HCT116 (cell line): ENCODE measurements at regions of chr14 and their contacts with region 1.

Region 1: DNA sequence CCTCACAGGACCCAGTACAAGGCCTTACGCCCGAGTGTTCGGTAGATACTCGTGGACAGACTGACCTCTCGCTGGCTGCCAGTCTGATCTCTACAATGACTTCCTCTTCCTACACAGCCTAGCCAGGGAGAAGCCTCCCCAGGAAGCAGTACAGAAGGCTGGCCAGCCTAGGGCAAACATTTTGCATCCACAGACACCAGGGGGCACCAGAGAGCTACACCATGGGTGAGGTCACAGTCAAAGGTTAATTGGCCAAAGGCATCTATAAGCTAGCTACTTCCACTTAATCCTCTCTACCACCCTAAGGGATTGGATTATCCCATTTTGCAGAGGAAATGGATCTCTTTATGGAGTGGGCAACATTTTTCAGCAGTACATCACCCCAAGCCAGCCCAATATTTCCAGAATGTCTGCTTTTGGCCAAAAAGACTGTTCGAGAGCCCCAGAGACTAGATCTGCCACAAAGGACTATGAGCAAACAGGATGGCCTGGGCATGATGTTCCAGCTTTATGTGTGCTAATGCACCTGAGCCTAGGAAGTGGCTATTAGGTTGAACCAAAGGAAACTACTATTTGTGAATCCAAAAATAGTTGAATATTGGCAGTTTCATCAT is 14.6 kb upstream of the PNMA1 start:
- DNase-seq: peak; percentile 61
- ATAC-seq: peak; percentile 93
- H3K4me3 ChIP-seq: no peak overlapping the region
- H3K27ac ChIP-seq: 0 out of 2 replicates have a peak overlapping the region, but pooled peaks have one; percentile 1
- H3K4me1 ChIP-seq: peaks cover 3 to 21% of the 10 kb centered on the region in 2 experiments; a peak in 3 of 4 replicates
- H3K27me3 ChIP-seq: no peaks in the 10 kb centered on the region
- CTCF ChIP-seq: peak; percentile 78 to 93 (median 91)
- POLR2A ChIP-seq: no peak
- RAD21 ChIP-seq: peak; percentile 98

Region 2: DNA sequence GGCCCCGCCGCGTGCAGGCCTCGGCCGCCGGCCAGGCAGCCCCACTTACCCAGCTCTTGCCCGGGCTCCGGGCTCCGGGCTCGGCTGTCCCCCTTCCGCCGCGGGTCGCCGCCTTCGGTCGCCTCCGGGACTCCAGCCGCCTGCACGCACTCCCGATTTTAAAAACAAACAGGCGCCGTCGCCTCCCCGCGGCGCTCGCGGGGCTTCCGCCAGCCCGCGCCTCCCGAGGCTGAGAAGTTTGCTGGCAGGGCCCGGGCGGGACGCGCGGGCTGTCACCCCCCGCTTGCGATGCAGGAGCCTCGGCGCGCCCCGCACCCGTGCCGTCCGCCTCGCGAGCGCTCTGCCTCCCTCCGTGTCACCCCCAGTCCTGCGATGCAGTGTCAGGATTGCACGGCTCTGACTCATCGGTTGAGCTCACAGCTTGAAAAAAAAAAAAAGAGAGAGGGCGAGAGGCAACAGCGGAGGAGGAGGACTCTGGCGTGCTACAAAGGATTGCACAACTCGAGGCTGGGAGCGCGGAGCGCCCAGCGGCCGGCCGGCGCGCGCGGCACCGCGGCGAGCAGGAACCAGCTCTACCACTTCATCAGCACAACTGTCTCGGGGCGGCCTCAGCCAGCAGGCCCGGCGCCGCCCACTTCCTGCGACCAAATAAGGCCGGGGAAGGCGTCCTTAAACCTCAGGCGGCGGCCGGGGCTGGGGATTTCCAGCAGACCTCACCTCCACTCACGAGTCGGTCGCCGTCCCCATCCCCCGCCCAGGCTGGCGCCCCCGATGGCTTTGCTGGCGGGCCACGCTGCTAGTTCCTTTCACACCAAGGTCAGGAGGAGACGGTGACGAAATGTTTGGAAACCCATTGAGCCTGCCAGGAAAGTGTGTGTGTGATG is 31.1 kb after region 1 on chr14:
- CTCF ChIA-PET with region 1: interaction called, 34 read pairs
- POLR2A ChIA-PET with region 1: interaction called, 4 read pairs
- RAD21 ChIA-PET with region 1: interaction called, 6 to 10 read pairs
- intact Hi-C with region 1: loop called (anchors 1 kb)
- DNase-seq: peak; percentile 88
- ATAC-seq: peak; percentile 86
- H3K4me3 ChIP-seq: peak overlapping the region; percentile 79
- H3K27ac ChIP-seq: peak overlapping the region; percentile 95
- H3K4me1 ChIP-seq: peaks cover 29 to 65% of the 10 kb centered on the region in 2 experiments
- H3K27me3 ChIP-seq: no peaks in the 10 kb centered on the region
- CTCF ChIP-seq: no peak
- POLR2A ChIP-seq: peak; percentile 76
- RAD21 ChIP-seq: no peak

Region 3: GRCh38 chr14:73825551-73826188 is 96.8 kb after region 1 on chr14:
- CTCF ChIA-PET with region 1: interaction called, 59 read pairs
- POLR2A ChIA-PET with region 1: no interaction called
- RAD21 ChIA-PET with region 1: interaction called in 1 of 2 experiments, 7 read pairs
- intact Hi-C with region 1: loop called (anchors 1 kb)
- DNase-seq: peak; percentile 76
- ATAC-seq: peak; percentile 96
- H3K4me3 ChIP-seq: no peak overlapping the region
- H3K27ac ChIP-seq: no peak overlapping the region
- H3K4me1 ChIP-seq: peaks cover 0 to 10% of the 10 kb centered on the region in 2 experiments; a peak in 2 of 4 replicates
- H3K27me3 ChIP-seq: no peaks in the 10 kb centered on the region
- CTCF ChIP-seq: peak; percentile 84 to 90 (median 90)
- POLR2A ChIP-seq: no peak
- RAD21 ChIP-seq: peak; percentile 89

Region 4: DNA sequence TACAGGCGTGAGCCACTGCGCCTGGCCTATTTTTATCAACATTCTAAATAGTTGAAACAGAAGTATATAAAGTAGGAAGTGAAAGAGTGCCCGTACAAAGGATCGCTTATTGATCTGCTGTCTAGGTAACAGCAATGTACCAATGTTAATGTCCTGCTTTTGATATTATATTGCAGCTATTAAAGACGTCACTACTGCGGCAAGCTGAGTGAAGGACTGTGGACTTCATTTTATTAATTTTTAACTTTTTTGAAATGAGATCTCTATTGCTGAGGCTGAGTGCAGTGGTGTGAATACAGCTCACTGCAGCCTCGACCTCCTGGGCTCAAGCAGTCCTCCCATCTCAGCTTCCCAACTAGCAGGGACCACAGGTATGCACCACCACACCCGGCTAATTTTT is 133.7 kb after region 1 on chr14:
- CTCF ChIA-PET with region 1: interaction called, 11 read pairs
- POLR2A ChIA-PET with region 1: no interaction called
- RAD21 ChIA-PET with region 1: no interaction called
- intact Hi-C with region 1: loop called (anchors 5 kb)
- DNase-seq: no peak
- ATAC-seq: no peak
- H3K4me3 ChIP-seq: no peak overlapping the region
- H3K27ac ChIP-seq: no peak overlapping the region
- H3K4me1 ChIP-seq: no peaks in the 10 kb centered on the region
- H3K27me3 ChIP-seq: no peaks in the 10 kb centered on the region
- CTCF ChIP-seq: no peak
- POLR2A ChIP-seq: no peak
- RAD21 ChIP-seq: no peak

Region 5: GRCh38 chr14:73949744-73950734 is 221.2 kb after region 1 on chr14 and contains the starts of genes COQ6 and FAM161B:
- CTCF ChIA-PET with region 1: interaction called, 6 read pairs
- POLR2A ChIA-PET with region 1: no interaction called
- RAD21 ChIA-PET with region 1: interaction called in 1 of 2 experiments, 3 read pairs
- intact Hi-C with region 1: loop called (anchors 5 kb)
- DNase-seq: peak; percentile 97
- ATAC-seq: peak; percentile 93
- H3K4me3 ChIP-seq: peak within 1 kb of the TSS; percentile 61 to 81
- H3K27ac ChIP-seq: peak within 1 kb of the TSS; percentile 81
- H3K4me1 ChIP-seq: peaks cover 4 to 17% of the 10 kb centered on the region in 2 experiments; a peak in 2 of 4 replicates
- H3K27me3 ChIP-seq: no peaks in the 10 kb centered on the region
- CTCF ChIP-seq: no peak
- POLR2A ChIP-seq: no peak
- RAD21 ChIP-seq: no peak
- total RNA-seq, gene COQ6: 21.6 TPM
- total RNA-seq, gene FAM161B: 1.6 TPM

Region 6: DNA sequence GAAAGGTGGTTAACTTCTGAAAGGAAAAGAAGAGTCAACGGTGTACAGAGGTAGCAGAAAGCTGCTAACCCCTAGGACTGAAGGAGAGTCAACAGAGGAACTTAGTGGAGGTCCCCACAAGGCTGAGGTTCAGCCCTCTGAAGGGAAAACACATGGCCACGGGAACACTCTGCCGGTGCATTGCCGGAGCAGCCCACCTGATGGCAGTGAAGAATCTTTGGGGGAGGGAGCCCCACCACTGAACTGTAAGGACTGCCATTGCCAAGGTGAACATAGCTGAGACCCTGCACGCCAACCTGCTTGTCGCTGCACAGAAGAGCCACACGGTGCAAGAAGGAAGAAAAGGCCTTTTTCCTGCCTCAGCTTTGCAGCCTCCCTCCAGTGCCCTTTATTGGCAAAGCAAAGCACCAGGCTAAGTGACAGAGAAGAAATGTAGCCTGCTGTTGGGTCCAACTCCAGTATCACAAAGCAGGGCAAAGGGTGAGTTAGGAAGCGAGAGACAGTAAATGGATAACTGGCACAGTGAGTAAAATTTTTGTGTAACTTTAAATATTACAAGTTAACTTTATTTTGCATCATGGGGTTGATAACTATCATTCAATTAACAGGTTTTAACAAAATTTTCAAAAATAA is 432.8 kb after region 1 on chr14:
- CTCF ChIA-PET with region 1: no interaction called
- POLR2A ChIA-PET with region 1: no interaction called
- RAD21 ChIA-PET with region 1: no interaction called
- intact Hi-C with region 1: no loop called
- DNase-seq: no peak
- ATAC-seq: peak; percentile 22; the same call in 1 of the 2 replicates
- H3K4me3 ChIP-seq: no peak overlapping the region
- H3K27ac ChIP-seq: no peak overlapping the region
- H3K4me1 ChIP-seq: no peaks in the 10 kb centered on the region
- H3K27me3 ChIP-seq: no peaks in the 10 kb centered on the region
- CTCF ChIP-seq: no peak
- POLR2A ChIP-seq: no peak
- RAD21 ChIP-seq: no peak